Motor neuron (in vitro differentiated cells): ENCODE measurements at regions of chrX and their contacts with region 1.

Region 1: GRCh38 chrX:9677098-9677739 is 88.4 kb downstream of the GPR143 start:
- ATAC-seq: peak in 3 of 8 experiments; percentile 21 to 55 (median 43)
- H3K4me3 ChIP-seq: no peak overlapping the region
- H3K27ac ChIP-seq: no peak overlapping the region
- H3K4me1 ChIP-seq: no peaks in the 10 kb centered on the region

Region 2: DNA sequence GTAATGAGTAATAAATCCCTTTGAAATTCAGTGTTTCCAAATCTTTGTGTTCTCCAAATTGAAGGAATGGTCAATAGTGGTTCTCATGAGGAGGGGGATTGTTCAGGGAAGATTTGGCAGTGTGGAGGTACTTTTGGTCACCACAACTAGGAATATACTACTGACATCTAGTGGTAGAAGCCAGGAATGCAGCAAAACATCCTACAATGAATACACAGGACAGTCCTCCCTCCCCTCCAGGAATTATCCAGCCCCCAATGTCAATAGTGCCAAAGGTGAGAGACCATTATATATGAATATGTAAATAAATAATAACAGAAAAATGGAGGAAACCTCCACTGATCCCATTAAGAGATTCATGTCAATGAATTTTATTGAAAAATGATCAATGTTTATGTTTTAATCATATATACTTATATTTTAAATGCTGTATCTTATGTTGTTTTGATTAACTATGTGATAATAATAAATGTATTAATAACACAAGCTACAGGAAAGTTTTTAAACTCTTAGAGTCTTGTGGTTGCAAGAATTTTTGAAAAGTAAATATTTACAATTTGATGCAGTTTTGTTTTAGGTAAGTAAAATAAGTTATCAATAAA is 861.7 kb before region 1 on chrX:
- in situ Hi-C with region 1: loop called in 1 of 9 experiments (anchors 25 kb)
- ATAC-seq: peak in 2 of 8 experiments; percentile 29 to 68
- H3K4me3 ChIP-seq: no peak overlapping the region
- H3K27ac ChIP-seq: no peak overlapping the region
- H3K4me1 ChIP-seq: no peaks in the 10 kb centered on the region

Region 3: GRCh38 chrX:9807355-9808182 is 130.3 kb after region 1 on chrX:
- in situ Hi-C with region 1: no loop called
- ATAC-seq: peak in 2 of 8 experiments; percentile 23 to 24
- H3K4me3 ChIP-seq: no peak overlapping the region
- H3K27ac ChIP-seq: no peak overlapping the region
- H3K4me1 ChIP-seq: no peaks in the 10 kb centered on the region

Region 4: GRCh38 chrX:9980927-9981326 is 303.7 kb after region 1 on chrX:
- in situ Hi-C with region 1: no loop called
- ATAC-seq: peak in 1 of 8 experiments; percentile 18
- H3K4me3 ChIP-seq: no peak overlapping the region
- H3K27ac ChIP-seq: peak overlapping the region; percentile 52 to 72
- H3K4me1 ChIP-seq: peaks cover 2 to 15% of the 10 kb centered on the region in 2 donors